ENCODE measurements at regions of chr13 and their contacts with region 1.

Region 1: GRCh38 chr13:55245005-55245644 is 1895.6 kb upstream of the PRR20A start:
- DNase-seq: no peak
- H3K4me3 ChIP-seq: no peak overlapping the region
- H3K27ac ChIP-seq: no peak overlapping the region
- H3K4me1 ChIP-seq: no peaks in the 10 kb centered on the region
- H3K27me3 ChIP-seq: no peaks in the 10 kb centered on the region
- CTCF ChIP-seq: peak; percentile 59

Region 2: GRCh38 chr13:53250266-53250875 is 1994.8 kb before region 1 on chr13:
- CTCF ChIA-PET with region 1: no interaction called
- POLR2A ChIA-PET with region 1: no interaction called
- intact Hi-C with region 1: loop called (anchors 2 kb)
- DNase-seq: peak; percentile 4 to 69
- H3K4me3 ChIP-seq: no peak overlapping the region
- H3K27ac ChIP-seq: no peak overlapping the region
- H3K4me1 ChIP-seq: no peaks in the 10 kb centered on the region
- H3K27me3 ChIP-seq: no peaks in the 10 kb centered on the region
- CTCF ChIP-seq: peak; percentile 85

Region 3: GRCh38 chr13:53782488-53782961 is 1462.6 kb before region 1 on chr13:
- CTCF ChIA-PET with region 1: interaction called, 5 read pairs
- POLR2A ChIA-PET with region 1: no interaction called
- intact Hi-C with region 1: loop called (anchors 2 kb)
- DNase-seq: peak; percentile 7 to 38
- H3K4me3 ChIP-seq: no peak overlapping the region
- H3K27ac ChIP-seq: no peak overlapping the region
- H3K4me1 ChIP-seq: no peaks in the 10 kb centered on the region
- H3K27me3 ChIP-seq: no peaks in the 10 kb centered on the region
- CTCF ChIP-seq: peak; percentile 85

Region 4: DNA sequence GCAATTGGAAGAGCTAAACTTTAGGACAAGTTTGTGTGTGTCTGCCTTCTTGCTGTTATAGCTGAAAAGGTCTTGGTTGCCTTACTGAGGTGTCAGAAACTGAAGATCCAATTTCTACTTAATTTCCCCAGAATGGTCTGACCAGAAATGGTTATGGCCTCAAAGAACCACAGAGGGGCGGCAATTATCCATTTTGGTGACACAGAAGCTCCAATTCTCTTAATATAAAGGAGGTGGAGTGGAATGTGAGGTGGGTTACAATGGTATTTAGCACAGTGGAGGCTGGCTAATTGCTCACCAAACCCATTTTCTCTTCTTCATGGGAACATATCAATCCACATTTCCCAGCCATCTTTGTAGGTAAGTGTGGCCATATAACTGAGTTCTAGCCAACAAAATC is 1059.3 kb before region 1 on chr13:
- CTCF ChIA-PET with region 1: no interaction called
- POLR2A ChIA-PET with region 1: no interaction called
- intact Hi-C with region 1: loop called (anchors 2 kb)
- DNase-seq: peak; percentile 13 to 35
- H3K4me3 ChIP-seq: no peak overlapping the region
- H3K27ac ChIP-seq: no peak overlapping the region
- H3K4me1 ChIP-seq: peaks cover 10% of the 10 kb centered on the region; the same call in 1 of the 2 replicates
- H3K27me3 ChIP-seq: no peaks in the 10 kb centered on the region
- CTCF ChIP-seq: peak; percentile 73

Measured in PC-9 (cell line).